Activated CD4-positive, alpha-beta memory T cell treated with anti-CD3 and anti-CD28 coated beads for 36 hours (primary cell): ENCODE measurements at regions of chr1 and their contacts with region 1.

Region 1: DNA sequence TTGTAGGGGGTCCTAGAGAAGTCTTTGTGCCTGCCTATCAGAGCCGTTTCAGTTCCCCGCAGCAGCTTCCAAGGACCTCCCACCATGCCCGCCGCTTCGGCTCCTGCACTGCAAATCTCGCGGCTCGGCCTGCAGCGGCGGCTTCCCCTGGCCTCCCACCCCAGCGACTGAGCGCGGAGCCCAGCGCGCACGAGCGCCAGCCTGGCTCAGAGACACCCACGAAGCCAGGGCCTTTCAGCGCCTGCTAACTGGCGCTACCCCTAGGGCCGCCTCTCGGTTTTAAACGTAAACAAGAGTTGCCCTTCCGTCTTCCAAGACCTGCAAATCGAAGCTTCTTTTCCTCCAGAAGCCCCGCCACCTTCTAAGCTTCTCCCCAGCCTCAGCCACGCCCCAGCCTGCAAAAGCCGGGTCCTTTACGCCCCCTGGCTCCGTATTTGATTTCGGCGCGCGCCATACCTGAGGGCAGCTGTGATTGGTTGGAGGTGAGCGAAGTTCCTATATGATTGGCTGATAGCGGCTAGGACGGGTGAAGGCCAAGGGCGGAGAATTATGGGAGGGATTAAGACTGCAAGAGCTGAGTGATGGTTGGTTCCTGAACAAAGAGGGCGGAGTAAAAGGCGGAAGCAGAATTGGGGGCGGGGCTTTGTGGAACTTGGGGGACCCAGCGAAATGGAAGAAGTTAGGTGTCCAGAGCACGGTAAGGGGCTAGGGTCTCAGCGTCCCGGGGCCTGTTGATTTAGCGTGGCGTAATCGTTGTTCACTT is at the start of gene TTF2:
- DNase-seq: peak; percentile 98
- H3K4me3 Mint-ChIP-seq: no peak within 1 kb of the TSS
- H3K27ac Mint-ChIP-seq: no peak within 1 kb of the TSS
- H3K4me1 Mint-ChIP-seq: peaks cover 40% of the 10 kb centered on the region
- H3K27me3 Mint-ChIP-seq: no peaks in the 10 kb centered on the region
- total RNA-seq, gene TTF2: 102 to 104 TPM

Region 2: GRCh38 chr1:116504308-116505156 is 555.3 kb before region 1 on chr1:
- CTCF ChIA-PET with region 1: no interaction called
- POLR2A ChIA-PET with region 1: no interaction called
- intact Hi-C with region 1: loop called (anchors 2 kb)
- DNase-seq: peak; percentile 92
- H3K4me3 Mint-ChIP-seq: peak overlapping the region; percentile 38
- H3K27ac Mint-ChIP-seq: peak overlapping the region; percentile 97
- H3K4me1 Mint-ChIP-seq: peaks cover 65% of the 10 kb centered on the region
- H3K27me3 Mint-ChIP-seq: no peaks in the 10 kb centered on the region

Region 3: DNA sequence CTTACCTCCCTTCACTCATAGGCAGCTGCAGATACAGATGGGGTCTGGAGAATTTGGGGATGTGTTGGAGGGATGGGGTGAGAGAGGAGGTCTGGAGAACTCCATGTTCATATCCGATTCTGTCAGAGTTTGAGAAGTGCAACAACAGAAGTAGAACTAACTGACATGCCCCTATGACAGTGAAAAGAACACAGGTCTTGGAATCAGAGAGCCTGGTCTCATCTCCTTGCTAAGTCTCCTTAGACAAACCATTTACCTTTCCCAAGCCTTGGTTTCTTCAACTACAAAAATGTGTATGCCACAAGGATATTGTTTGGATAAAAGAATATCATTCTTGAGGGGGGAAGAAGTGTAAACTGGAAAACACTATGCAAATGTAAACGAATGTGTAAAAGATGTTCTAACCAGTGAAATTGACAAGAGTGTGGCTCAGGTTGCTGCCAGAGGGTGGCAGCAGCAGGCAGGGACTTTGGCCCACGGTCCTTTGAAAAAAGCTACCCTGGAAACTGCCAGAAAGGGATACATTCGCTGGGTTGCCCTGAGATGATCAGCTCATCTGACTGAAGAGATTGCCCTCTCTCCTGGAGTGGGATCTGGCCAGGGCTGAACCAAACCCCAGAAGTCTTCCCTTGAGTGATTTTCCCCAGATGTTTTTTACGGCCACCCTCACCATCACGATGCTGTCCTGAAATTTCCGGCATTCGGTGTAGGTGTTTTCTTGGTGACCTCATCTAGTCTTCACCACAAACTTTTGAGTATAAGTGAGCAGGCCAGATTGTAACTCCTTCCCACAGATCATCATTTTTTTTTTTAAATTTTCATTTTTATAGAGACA is 322.6 kb before region 1 on chr1:
- CTCF ChIA-PET with region 1: interaction called, 16 read pairs
- POLR2A ChIA-PET with region 1: interaction called, 42 read pairs
- intact Hi-C with region 1: loop called (anchors 1 kb)
- DNase-seq: peak; percentile 84
- H3K4me3 Mint-ChIP-seq: peak overlapping the region; percentile 74
- H3K27ac Mint-ChIP-seq: peak overlapping the region; percentile 100
- H3K4me1 Mint-ChIP-seq: peaks cover 68% of the 10 kb centered on the region
- H3K27me3 Mint-ChIP-seq: no peaks in the 10 kb centered on the region

Region 4: DNA sequence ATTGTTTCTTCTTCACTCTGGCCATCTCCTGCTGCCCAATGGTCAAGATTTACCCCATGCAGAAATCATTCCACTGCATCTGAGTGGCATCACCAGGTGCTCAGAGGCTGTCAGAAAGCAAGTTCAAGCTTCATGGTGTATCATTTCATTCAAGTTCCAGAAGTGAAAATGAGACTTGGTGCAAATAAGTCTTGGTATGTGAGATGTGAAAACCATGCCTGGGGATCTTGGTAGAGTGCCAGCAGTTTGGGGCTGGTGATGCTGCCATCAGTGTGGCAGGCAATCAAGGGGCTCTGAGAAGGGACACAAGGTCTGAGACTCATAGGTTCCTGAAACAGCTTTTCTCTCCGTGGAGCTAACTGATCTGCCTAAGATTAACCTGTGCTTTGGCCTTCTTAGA is 253.6 kb before region 1 on chr1:
- CTCF ChIA-PET with region 1: no interaction called
- POLR2A ChIA-PET with region 1: interaction called, 21 read pairs
- intact Hi-C with region 1: no loop called
- DNase-seq: peak; percentile 91
- H3K4me3 Mint-ChIP-seq: peak overlapping the region; percentile 79
- H3K27ac Mint-ChIP-seq: peak overlapping the region; percentile 99
- H3K4me1 Mint-ChIP-seq: peaks cover 78% of the 10 kb centered on the region
- H3K27me3 Mint-ChIP-seq: no peaks in the 10 kb centered on the region

Region 5: DNA sequence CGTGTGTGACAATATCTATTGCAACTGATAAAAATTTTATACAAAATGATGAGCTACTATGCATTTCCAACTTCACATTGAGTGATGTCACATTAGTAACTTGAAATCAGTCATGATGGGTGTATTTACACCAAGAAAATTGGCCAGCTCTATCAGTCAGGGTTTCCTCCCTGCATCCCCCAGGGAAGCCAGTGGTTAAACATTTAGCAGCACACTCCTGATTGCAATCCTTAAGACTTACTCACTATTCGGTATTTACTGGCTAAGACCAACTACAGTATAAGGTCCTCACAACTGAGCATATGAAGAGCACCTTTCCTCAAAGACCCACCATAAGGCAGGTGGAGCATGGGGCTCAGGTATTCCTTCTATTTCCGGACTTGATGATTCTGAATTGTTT is 191.5 kb before region 1 on chr1:
- CTCF ChIA-PET with region 1: no interaction called
- POLR2A ChIA-PET with region 1: no interaction called
- intact Hi-C with region 1: no loop called
- DNase-seq: no peak
- H3K4me3 Mint-ChIP-seq: no peak overlapping the region
- H3K27ac Mint-ChIP-seq: no peak overlapping the region
- H3K4me1 Mint-ChIP-seq: no peaks in the 10 kb centered on the region
- H3K27me3 Mint-ChIP-seq: no peaks in the 10 kb centered on the region

Region 6: GRCh38 chr1:117001254-117001927 is 58.5 kb before region 1 on chr1 and contains the start of gene CD101:
- CTCF ChIA-PET with region 1: no interaction called
- POLR2A ChIA-PET with region 1: interaction called, 3 read pairs
- intact Hi-C with region 1: loop called (anchors 1 kb)
- DNase-seq: peak; percentile 66
- H3K4me3 Mint-ChIP-seq: no peak within 1 kb of the TSS
- H3K27ac Mint-ChIP-seq: peak within 1 kb of the TSS; percentile 26
- H3K4me1 Mint-ChIP-seq: peaks cover 31% of the 10 kb centered on the region
- H3K27me3 Mint-ChIP-seq: no peaks in the 10 kb centered on the region
- total RNA-seq, gene CD101: 0.14 to 0.19 TPM

Region 7: GRCh38 chr1:117367047-117368018 is 307.5 kb after region 1 on chr1 and contains the start of gene MAN1A2:
- CTCF ChIA-PET with region 1: no interaction called
- POLR2A ChIA-PET with region 1: interaction called, 3 read pairs
- intact Hi-C with region 1: loop called (anchors 5 kb)
- DNase-seq: peak; percentile 79
- H3K4me3 Mint-ChIP-seq: peak within 1 kb of the TSS; percentile 94
- H3K27ac Mint-ChIP-seq: peak within 1 kb of the TSS; percentile 96
- H3K4me1 Mint-ChIP-seq: peaks cover 50% of the 10 kb centered on the region
- H3K27me3 Mint-ChIP-seq: no peaks in the 10 kb centered on the region
- total RNA-seq, gene MAN1A2: 18.3 to 22.5 TPM